ENCODE measurements at regions of chr1 and their contacts with region 1.

Region 1: DNA sequence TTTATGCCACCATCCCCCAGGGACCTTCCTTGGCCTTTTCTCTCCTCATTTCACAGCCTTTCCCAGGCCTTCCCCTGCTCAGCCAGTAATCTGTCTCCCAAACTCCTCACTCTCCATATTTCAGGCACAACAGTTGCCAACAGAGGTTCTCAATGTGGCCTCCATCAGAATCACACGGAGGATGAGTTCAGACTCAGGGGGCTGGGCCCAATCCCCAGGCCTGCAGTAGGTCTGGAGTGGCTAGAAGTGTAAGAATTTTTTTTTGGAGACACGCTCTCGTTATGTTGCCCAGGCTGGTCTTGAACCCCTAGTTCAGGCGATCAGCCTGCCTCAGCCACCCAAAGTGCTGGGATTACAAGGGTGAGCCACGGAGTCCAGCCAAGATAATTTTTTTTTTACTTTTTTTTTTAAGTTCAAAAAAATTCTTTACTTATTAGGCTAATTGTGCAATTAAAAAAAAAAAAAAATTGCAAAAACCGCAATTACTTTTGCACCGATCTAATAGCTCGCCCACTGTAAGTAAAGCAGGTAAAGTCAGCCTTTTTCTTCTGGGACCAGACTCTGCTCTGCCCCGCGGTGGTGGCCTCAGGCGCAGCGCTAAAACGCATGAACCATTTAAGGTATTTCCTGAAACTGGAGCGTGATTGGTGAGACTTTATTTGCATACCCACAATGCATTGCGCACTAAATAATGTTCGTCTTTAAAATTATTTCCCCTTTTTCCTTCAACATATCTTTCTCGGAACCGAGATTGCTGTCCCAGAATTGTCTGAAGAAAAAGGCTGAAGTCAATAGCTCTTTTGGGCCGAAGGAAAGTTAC is 18.7 kb downstream of the KIAA2013 start:
- DNase-seq: peak; percentile 95
- ATAC-seq: peak; percentile 55
- H3K4me3 ChIP-seq: peak overlapping the region; percentile 77 to 85 (median 83)
- H3K4me3 Mint-ChIP-seq: peak overlapping the region; percentile 95
- H3K27ac ChIP-seq: peak overlapping the region; percentile 99 to 100
- H3K27ac Mint-ChIP-seq: peak overlapping the region; percentile 99
- H3K4me1 ChIP-seq: peaks cover 3 to 11% of the 10 kb centered on the region in 2 donors
- H3K4me1 Mint-ChIP-seq: peaks cover 28% of the 10 kb centered on the region
- H3K27me3 ChIP-seq: no peaks in the 10 kb centered on the region
- H3K27me3 Mint-ChIP-seq: no peaks in the 10 kb centered on the region
- CTCF ChIP-seq: peak; percentile 80

Region 2: DNA sequence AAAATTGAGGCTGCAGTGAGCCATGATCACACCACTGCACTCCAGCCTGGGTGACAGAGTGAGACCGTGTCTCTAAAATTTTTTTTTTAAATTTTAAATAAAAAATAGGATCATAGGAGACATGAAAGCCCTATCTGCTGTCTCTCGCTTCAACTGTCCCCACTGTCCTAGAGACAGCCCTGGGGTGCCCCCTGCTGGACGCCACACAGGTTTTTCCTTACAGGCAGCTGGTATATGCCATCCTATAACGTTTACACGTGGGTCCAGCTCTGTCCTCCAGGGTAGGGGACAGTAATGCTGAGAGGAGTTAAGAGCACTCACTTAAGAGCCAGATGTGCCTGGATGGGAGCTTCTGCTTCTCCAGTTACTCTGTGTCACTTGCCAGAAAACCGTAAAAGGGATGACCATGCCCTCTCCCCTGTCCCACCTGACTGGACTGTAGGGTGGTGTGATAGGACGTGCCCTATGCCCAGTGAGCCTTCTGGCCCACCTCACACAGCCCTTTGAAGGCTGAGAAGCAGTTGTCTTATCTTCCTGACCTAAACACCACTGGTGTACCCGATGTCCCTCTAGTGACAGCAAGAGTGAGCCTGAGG is 261.7 kb before region 1 on chr1:
- CTCF ChIA-PET with region 1: interaction called, 5 read pairs
- POLR2A ChIA-PET with region 1: interaction called, 3 read pairs
- intact Hi-C with region 1: loop called (anchors 5 kb)
- DNase-seq: peak; percentile 79
- ATAC-seq: peak; percentile 48
- H3K4me3 ChIP-seq: no peak overlapping the region
- H3K4me3 Mint-ChIP-seq: no peak overlapping the region
- H3K27ac ChIP-seq: no peak overlapping the region
- H3K27ac Mint-ChIP-seq: no peak overlapping the region
- H3K4me1 ChIP-seq: peaks cover 12 to 16% of the 10 kb centered on the region in 2 donors
- H3K4me1 Mint-ChIP-seq: peaks cover 18% of the 10 kb centered on the region
- H3K27me3 ChIP-seq: peaks cover 0 to 3% (median 0%) of the 10 kb centered on the region in 4 experiments
- H3K27me3 Mint-ChIP-seq: no peaks in the 10 kb centered on the region
- CTCF ChIP-seq: peak; percentile 93

Region 3: GRCh38 chr1:11805447-11806306 is 101.8 kb before region 1 on chr1 and contains the starts of genes CLCN6 and MTHFR:
- CTCF ChIA-PET with region 1: interaction called, 4 read pairs
- POLR2A ChIA-PET with region 1: interaction called, 54 read pairs
- intact Hi-C with region 1: loop called (anchors 1 kb)
- DNase-seq: peak; percentile 99
- ATAC-seq: peak; percentile 81
- H3K4me3 ChIP-seq: peak within 1 kb of the TSS; percentile 80 to 95 (median 80)
- H3K4me3 Mint-ChIP-seq: peak within 1 kb of the TSS; percentile 99
- H3K27ac ChIP-seq: peak within 1 kb of the TSS; percentile 95 to 99
- H3K27ac Mint-ChIP-seq: peak within 1 kb of the TSS; percentile 99
- H3K4me1 ChIP-seq: peaks cover 63 to 66% of the 10 kb centered on the region in 2 donors
- H3K4me1 Mint-ChIP-seq: peaks cover 73% of the 10 kb centered on the region
- H3K27me3 ChIP-seq: no peaks in the 10 kb centered on the region
- H3K27me3 Mint-ChIP-seq: no peaks in the 10 kb centered on the region
- CTCF ChIP-seq: no peak
- total RNA-seq, gene CLCN6: 99.8 and 105 TPM in 2 replicates
- total RNA-seq, gene MTHFR: 109 and 114 TPM in 2 replicates

Region 4: DNA sequence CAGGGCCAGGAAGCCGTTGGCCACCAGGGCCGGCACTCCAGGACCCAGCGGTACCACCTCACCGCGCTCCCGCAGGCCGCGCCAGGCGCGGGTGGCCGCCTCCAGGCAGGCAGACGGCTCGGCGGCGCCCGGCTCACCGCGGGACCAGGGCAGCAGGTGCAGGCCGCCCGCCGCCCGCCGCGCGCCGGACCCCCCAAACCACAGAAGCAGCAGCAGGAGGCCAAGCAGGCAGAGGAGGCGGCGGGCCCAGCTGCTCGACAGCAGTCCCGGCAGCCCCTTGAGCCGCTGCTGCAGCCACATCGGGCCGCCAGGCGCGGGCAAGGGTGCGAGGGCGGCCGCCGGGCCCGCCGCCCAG is 18.4 kb after region 1 on chr1:
- CTCF ChIA-PET with region 1: no interaction called
- POLR2A ChIA-PET with region 1: interaction called, 45 read pairs
- intact Hi-C with region 1: loop called (anchors 1 kb)
- DNase-seq: no peak
- ATAC-seq: peak; percentile 6
- H3K4me3 ChIP-seq: peak overlapping the region in 4 of 5 experiments; percentile 32 to 61 (median 51)
- H3K4me3 Mint-ChIP-seq: peak overlapping the region; percentile 91
- H3K27ac ChIP-seq: no peak overlapping the region
- H3K27ac Mint-ChIP-seq: peak overlapping the region; percentile 15
- H3K4me1 ChIP-seq: peaks cover 16 to 26% of the 10 kb centered on the region in 2 donors
- H3K4me1 Mint-ChIP-seq: peaks cover 34% of the 10 kb centered on the region
- H3K27me3 ChIP-seq: no peaks in the 10 kb centered on the region
- H3K27me3 Mint-ChIP-seq: no peaks in the 10 kb centered on the region
- CTCF ChIP-seq: no peak

Region 5: DNA sequence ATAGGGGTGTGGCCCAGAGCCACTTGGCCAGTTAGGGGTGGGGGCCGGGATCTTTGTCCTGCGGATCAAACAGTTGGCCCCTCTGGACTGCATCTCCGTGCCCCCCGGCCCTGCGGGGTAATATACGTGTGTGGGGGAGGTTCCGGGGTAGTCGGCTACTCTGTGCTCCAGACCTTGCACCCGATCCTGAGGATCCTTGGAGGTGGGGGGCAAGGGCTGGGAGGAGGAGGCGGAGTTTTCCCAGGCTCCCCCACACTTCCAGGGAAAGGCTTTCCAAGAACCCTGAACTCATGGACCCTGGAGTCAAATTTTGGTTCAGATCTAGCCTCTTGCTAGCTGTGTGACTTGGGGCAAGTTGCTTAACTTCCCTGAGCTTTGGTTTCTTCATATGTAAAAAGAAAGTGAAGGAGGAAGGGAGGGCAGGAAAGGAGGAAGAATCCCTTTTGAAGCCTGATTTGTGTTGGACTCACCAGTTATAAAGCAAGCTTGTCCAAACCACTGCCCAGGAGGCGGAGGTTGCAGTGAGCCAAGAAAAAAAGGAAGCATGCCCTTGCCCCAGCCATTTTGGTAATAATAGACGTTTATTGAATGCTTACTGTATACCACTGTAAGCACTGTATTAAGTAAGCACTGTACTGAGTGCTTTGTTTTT is 112.5 kb after region 1 on chr1:
- CTCF ChIA-PET with region 1: no interaction called
- POLR2A ChIA-PET with region 1: interaction called, 18 read pairs
- intact Hi-C with region 1: loop called (anchors 1 kb)
- DNase-seq: peak; percentile 40
- ATAC-seq: no peak
- H3K4me3 ChIP-seq: peak overlapping the region; percentile 61 to 81 (median 78)
- H3K4me3 Mint-ChIP-seq: peak overlapping the region; percentile 85
- H3K27ac ChIP-seq: peak overlapping the region in 1 of 2 donors; percentile 70
- H3K27ac Mint-ChIP-seq: peak overlapping the region; percentile 79
- H3K4me1 ChIP-seq: peaks cover 9% of the 10 kb centered on the region in 2 donors
- H3K4me1 Mint-ChIP-seq: peaks cover 18% of the 10 kb centered on the region
- H3K27me3 ChIP-seq: no peaks in the 10 kb centered on the region
- H3K27me3 Mint-ChIP-seq: no peaks in the 10 kb centered on the region
- CTCF ChIP-seq: no peak

Region 6: DNA sequence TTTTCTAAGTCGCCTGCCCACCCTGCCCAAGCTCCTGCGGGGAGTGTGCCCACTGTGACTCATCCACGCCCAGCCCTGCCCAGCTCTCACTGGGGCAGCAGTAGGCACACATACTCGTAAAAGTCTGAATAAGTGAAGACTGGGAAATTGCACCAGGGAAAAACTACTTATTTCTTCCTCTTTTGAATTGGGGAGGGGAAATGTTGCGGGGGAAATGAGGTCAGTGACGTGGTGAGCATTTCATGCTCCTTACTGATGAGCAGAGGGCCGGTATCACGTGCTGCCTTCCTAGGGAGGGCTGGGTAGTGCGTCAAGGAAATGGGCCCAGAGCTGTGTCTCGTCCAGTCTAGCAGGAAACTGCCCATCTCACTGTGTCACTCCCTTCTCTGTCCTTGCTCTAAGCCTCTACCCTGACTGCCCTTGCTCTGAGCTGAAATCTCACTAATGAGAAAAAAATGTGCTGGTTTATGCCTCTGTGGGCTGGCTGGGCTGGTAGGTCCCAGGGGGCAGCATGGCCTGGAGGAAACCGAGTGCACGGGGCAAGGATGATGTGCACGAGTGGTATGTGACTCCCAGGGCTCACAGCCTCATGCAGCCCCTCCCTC is 245.8 kb after region 1 on chr1:
- CTCF ChIA-PET with region 1: no interaction called
- POLR2A ChIA-PET with region 1: interaction called, 4 read pairs
- intact Hi-C with region 1: loop called (anchors 10 kb)
- DNase-seq: peak; percentile 89
- ATAC-seq: peak; percentile 48
- H3K4me3 ChIP-seq: peak overlapping the region in 1 of 5 experiments; percentile 43
- H3K4me3 Mint-ChIP-seq: peak overlapping the region; percentile 69
- H3K27ac ChIP-seq: peak overlapping the region; percentile 93
- H3K27ac Mint-ChIP-seq: peak overlapping the region; percentile 92
- H3K4me1 ChIP-seq: peaks cover 74 to 91% of the 10 kb centered on the region in 2 donors
- H3K4me1 Mint-ChIP-seq: peaks cover 85% of the 10 kb centered on the region
- H3K27me3 ChIP-seq: no peaks in the 10 kb centered on the region
- H3K27me3 Mint-ChIP-seq: no peaks in the 10 kb centered on the region
- CTCF ChIP-seq: no peak

Measured in B cell (primary cell).